ENCODE measurements at regions of chr7 and their contacts with region 1.

Region 1: DNA sequence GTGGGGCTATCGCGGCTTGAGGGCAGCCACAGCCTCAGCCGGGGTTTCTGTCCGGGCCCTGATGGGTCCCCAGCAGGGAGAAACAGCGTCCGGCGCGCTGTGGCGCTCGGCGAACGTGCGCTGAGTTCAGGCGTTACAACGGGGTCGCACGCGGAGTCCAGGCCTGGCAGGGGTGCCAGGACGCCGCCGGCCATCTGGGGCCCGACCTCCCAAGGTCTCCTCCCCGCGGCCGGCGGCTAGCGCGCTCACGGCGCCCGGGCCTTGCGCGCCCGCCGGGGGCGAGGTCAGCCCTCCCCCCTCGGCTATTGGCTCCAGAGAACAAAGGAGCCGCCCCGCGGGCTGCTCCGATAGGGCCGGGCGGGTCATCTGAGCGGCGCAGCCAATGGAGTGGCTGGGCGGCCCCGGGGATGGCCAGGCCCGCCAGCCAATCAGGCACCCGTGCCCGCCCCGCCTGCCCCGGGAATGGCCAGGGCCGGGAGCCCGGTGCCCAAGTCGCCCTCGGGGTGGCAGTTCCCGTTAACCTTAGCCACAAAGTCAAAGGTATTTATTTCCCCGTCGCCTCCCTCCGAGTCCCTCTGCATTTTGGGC is at the start of gene ZNF775:
- DNase-seq: peak; percentile 93
- H3K4me3 Mint-ChIP-seq: peak within 1 kb of the TSS; percentile 90
- H3K27ac Mint-ChIP-seq: peak within 1 kb of the TSS; percentile 83
- H3K4me1 Mint-ChIP-seq: peaks cover 59% of the 10 kb centered on the region
- H3K27me3 Mint-ChIP-seq: no peaks in the 10 kb centered on the region
- total RNA-seq, gene ZNF775: 3.9 and 4.5 TPM in 2 replicates

Region 2: DNA sequence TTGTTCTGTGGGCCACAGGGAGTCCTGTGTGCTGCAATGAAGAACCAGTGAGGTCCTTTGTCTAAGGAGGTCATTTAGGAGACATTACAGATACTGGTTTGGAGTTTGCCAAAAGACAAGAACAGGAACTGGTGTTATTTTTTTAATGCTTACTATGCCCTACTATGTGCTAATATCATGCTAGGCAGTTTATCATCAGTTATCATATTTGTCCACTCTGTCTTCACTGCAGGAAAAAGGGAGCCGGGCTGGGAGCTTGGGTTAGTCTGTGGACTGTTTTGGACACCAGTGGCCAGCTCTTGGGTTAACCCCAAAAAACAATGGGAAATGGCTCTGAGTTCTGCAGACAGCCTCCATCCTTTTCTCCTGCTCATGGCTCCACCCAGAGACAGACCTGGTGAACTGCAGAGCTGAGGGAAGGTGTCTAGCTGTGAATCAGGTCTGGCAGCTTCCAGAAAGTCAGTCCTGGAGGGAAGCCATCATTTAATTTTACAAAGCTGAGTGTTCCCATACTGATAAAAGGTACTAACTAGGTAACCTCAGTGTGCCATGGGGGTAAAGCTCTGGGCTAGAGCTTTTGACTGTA is 780.1 kb before region 1 on chr7:
- intact Hi-C with region 1: loop called (anchors 5 kb)
- DNase-seq: peak; percentile 9
- H3K4me3 Mint-ChIP-seq: no peak overlapping the region
- H3K27ac Mint-ChIP-seq: no peak overlapping the region
- H3K4me1 Mint-ChIP-seq: peaks cover 32% of the 10 kb centered on the region
- H3K27me3 Mint-ChIP-seq: peaks cover 4% of the 10 kb centered on the region

Region 3: GRCh38 chr7:149873074-149873969 is 505.6 kb before region 1 on chr7 and contains the start of gene ATP6V0E2:
- intact Hi-C with region 1: loop called (anchors 2 kb)
- DNase-seq: peak; percentile 92
- H3K4me3 Mint-ChIP-seq: peak within 1 kb of the TSS; percentile 90
- H3K27ac Mint-ChIP-seq: peak within 1 kb of the TSS; percentile 92
- H3K4me1 Mint-ChIP-seq: peaks cover 75% of the 10 kb centered on the region
- H3K27me3 Mint-ChIP-seq: no peaks in the 10 kb centered on the region
- total RNA-seq, gene ATP6V0E2: 47.5 and 51.2 TPM in 2 replicates

Region 4: DNA sequence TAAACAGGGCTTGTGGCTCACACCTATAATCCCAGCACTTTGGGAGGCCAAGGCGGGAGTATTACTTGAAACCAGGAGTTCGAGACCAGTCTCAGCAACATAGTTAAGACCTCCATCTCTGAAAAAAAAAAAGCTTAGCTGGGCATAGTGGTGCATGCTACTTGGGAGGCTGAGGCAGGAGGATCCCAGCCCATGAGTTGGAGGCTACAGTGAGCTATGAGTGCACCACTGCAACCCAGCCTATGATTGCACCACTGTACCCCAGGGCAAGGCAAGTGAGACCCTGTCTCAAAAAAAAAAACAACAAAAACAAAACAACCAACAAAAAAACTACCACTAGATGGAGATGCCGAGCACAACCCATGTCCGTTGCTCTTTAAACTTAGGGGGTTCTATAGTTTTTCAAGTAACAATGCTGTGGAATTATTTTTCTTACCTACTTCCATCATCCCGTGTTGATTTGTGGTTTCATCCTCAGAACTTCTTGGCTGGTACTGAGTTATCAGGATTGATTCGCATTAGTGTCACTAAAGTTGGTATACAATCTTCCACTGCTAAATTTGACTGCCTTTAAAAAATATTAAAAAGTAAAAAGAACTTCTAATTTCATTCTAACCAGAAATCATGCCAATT is 22.6 kb before region 1 on chr7:
- intact Hi-C with region 1: loop called (anchors 1 kb)
- DNase-seq: no peak
- H3K4me3 Mint-ChIP-seq: no peak overlapping the region
- H3K27ac Mint-ChIP-seq: no peak overlapping the region
- H3K4me1 Mint-ChIP-seq: peaks cover 44% of the 10 kb centered on the region
- H3K27me3 Mint-ChIP-seq: peaks cover 8% of the 10 kb centered on the region

Region 5: GRCh38 chr7:150368096-150368883 is 10.7 kb before region 1 on chr7 and contains the start of gene REPIN1:
- intact Hi-C with region 1: loop called (anchors 1 kb)
- DNase-seq: peak; percentile 73
- H3K4me3 Mint-ChIP-seq: peak within 1 kb of the TSS; percentile 94
- H3K27ac Mint-ChIP-seq: peak within 1 kb of the TSS; percentile 98
- H3K4me1 Mint-ChIP-seq: peaks cover 50% of the 10 kb centered on the region
- H3K27me3 Mint-ChIP-seq: peaks cover 1% of the 10 kb centered on the region
- total RNA-seq, gene REPIN1: 67.2 and 67.4 TPM in 2 replicates

Region 6: DNA sequence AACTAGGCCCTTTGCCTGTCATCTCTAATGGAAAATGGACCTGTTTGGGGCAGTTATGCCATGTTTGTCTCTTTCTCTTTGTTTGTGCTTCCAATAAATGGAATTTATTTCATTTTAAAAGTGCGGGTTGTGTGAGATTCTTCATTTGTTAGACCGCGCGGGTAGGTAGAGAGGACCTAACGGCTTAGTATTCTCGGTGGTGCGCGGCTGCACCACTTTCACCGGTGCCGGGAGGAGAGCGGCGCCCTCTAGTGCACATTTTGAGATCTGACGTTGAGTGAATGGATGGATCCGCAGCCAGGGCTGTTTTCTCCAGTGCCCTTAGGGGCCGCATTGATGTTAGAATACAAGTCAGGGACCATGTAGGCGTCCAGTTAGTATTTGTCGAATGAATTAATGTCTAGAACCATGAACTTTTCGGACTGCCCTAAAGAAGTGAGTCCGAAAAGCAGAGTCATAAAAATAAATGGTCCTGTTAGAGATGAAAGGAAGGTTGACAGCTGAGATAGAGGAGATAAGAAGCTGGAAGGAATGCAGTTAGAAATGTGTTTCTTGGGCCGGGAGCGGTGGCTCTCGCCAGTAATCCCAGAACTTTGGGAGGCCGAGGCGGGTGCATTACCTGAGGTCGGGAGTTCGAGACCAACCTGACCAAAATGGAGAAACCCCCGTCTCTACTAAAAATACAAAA is 42.2 kb after region 1 on chr7:
- intact Hi-C with region 1: loop called (anchors 1 kb)
- DNase-seq: peak; percentile 80
- H3K4me3 Mint-ChIP-seq: no peak overlapping the region
- H3K27ac Mint-ChIP-seq: no peak overlapping the region
- H3K4me1 Mint-ChIP-seq: peaks cover 12% of the 10 kb centered on the region
- H3K27me3 Mint-ChIP-seq: peaks cover 5% of the 10 kb centered on the region